IMR-90 (cell line): ENCODE measurements at regions of chrX and their contacts with region 1.

Region 1: DNA sequence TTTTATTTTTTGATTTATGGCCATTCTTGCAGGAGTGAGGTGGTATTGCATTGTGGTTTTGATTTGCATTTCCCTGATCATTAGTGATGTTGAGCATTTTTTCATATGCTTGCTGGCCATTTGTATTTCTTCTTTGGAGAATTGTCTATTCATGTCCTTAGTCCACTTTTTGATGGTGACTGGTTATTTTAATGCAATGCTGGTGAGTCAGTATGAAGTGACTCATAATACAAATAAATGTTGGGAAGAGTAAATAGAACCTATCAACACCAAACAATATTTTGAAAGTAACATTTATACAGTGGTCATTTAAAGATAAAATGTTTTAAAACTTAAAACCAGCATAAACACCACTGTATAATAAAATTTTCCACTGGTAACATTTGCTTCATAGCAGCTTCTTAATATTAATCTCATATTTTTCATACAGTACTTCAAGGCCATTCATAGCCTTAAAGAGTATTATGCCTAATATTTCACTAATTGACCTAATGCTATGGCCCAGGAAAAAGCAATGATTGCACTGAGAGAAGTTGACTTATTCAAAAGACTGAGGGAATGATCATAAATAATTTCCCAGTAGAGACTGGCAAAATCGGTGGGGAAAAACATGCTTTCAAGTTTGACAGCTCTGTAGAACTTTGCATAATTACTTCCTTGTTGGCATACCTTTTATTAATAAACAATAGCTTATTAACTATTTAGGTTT is 33.9 kb downstream of the CASK start:
- DNase-seq: peak; percentile 58
- ATAC-seq: peak; percentile 66
- H3K4me3 ChIP-seq: no peak overlapping the region
- H3K27ac ChIP-seq: no peak overlapping the region
- H3K4me1 ChIP-seq: no peaks in the 10 kb centered on the region
- H3K27me3 ChIP-seq: no peaks in the 10 kb centered on the region
- CTCF ChIP-seq: no peak
- POLR2A ChIP-seq: no peak
- RAD21 ChIP-seq: no peak

Region 2: GRCh38 chrX:40237731-40238178 is 1651.7 kb before region 1 on chrX:
- CTCF ChIA-PET with region 1: no interaction called
- POLR2A ChIA-PET with region 1: no interaction called
- dilution Hi-C with region 1: no loop called
- in situ Hi-C with region 1: no loop called
- intact Hi-C with region 1: no loop called
- DNase-seq: no peak
- ATAC-seq: no peak
- H3K4me3 ChIP-seq: no peak overlapping the region
- H3K27ac ChIP-seq: no peak overlapping the region
- H3K4me1 ChIP-seq: no peaks in the 10 kb centered on the region
- H3K27me3 ChIP-seq: peaks cover 7% of the 10 kb centered on the region
- CTCF ChIP-seq: no peak
- POLR2A ChIP-seq: no peak
- RAD21 ChIP-seq: no peak

Region 3: DNA sequence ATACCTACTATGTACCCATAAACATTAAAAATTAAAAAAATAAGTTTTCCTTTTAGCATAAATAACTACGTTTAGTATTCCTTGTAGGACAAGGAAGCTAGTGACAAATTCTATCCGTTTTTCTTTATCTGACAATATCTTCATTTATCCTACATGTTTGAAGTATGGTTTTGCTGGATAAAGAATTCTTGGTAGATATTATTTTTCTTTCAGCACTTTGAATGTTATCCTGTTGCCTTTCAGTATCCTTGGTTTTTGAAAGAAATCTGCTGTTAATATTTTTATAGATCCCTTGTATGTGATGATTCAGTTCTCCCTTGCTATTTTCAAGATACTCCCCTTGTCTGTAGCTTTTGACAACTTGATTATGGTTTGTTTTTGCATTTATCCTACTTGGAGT is 42.8 kb before region 1 on chrX:
- CTCF ChIA-PET with region 1: no interaction called
- POLR2A ChIA-PET with region 1: no interaction called
- dilution Hi-C with region 1: no loop called
- in situ Hi-C with region 1: no loop called
- intact Hi-C with region 1: no loop called
- DNase-seq: no peak
- ATAC-seq: no peak
- H3K4me3 ChIP-seq: no peak overlapping the region
- H3K27ac ChIP-seq: no peak overlapping the region
- H3K4me1 ChIP-seq: no peaks in the 10 kb centered on the region
- H3K27me3 ChIP-seq: no peaks in the 10 kb centered on the region
- CTCF ChIP-seq: no peak
- POLR2A ChIP-seq: no peak
- RAD21 ChIP-seq: no peak

Region 4: DNA sequence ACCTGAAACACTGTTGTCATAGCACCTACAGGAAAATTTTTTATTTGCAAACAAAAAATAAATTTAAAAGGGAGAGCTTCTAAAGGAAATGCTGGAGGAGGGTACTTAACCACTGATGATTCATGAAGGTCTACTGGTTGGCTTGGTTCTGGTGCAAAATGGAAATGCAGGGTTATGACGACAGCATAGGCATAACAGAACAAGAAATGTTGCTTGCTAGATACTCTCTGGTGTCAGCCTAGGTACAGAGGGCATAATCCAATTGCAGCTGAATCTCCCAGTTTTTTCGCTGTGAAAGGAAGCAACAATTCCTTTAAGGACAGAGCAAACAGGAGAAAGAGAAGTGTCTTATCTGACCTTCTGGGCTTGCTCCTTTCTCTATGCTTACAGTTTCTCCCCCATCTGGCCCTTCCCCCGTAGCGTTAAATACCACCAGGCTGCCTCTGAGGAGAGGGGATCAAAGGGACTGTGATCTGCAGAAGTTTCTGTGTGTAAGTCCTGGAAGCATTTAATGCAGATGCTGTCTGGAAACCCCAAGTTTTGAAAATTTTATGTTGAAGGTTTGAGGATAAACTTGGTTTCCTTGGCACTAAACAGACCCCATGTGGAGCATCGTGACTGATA is 57.6 kb after region 1 on chrX:
- CTCF ChIA-PET with region 1: no interaction called
- POLR2A ChIA-PET with region 1: no interaction called
- dilution Hi-C with region 1: no loop called
- in situ Hi-C with region 1: no loop called
- intact Hi-C with region 1: loop called (anchors 2 kb)
- DNase-seq: no peak
- ATAC-seq: no peak
- H3K4me3 ChIP-seq: no peak overlapping the region
- H3K27ac ChIP-seq: no peak overlapping the region
- H3K4me1 ChIP-seq: no peaks in the 10 kb centered on the region
- H3K27me3 ChIP-seq: peaks cover 13% of the 10 kb centered on the region
- CTCF ChIP-seq: no peak
- POLR2A ChIP-seq: no peak
- RAD21 ChIP-seq: no peak